ENCODE measurements at regions of chr17 and their contacts with region 1.

Region 1: DNA sequence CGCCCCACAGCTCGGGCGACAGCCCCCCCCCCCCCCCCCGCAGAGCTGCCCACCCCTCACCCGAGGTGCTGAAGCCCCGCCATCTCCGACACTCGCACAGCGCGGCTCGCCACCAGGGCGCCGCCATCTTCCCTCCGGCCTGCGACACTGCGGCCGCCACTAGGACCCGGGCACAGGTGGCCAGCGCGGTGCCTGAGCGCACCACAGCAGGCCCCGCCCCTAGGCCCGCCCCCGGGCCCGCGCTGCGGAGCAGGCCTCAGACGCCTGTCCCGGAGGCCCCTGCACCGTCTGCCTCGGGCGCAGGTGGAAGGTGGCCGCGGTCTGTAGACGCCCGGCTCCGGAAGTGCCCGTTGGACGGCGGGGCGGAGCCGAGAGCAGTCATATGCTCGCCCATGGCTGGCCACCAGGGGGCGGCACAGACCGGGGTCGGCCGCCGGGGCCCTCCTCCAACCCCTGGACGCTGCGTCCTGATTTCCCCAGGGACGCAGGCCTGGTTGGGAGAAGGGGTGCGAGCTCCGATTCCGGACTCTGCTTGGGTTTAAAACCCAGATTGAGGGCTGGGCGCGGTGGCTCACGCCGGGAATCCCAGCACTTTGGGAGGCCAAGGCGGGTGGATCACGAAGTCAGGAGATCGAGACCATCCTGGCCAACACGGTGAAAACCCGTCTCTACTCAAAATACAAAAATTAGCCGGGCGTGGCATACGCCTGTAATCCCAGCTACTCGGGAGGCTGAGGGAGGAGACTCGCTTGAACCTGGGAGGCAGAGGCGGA is at the start of gene MRPL38:
- DNase-seq: peak; percentile 91 to 97 (median 96)
- ATAC-seq: peak; percentile 95 to 96
- H3K4me3 ChIP-seq: peak within 1 kb of the TSS; percentile 77
- H3K27ac ChIP-seq: peak within 1 kb of the TSS; percentile 75
- H3K4me1 ChIP-seq: no peaks in the 10 kb centered on the region
- H3K27me3 ChIP-seq: no peaks in the 10 kb centered on the region
- total RNA-seq, gene MRPL38: 64.1 to 94.2 (median 83.8) TPM

Region 2: DNA sequence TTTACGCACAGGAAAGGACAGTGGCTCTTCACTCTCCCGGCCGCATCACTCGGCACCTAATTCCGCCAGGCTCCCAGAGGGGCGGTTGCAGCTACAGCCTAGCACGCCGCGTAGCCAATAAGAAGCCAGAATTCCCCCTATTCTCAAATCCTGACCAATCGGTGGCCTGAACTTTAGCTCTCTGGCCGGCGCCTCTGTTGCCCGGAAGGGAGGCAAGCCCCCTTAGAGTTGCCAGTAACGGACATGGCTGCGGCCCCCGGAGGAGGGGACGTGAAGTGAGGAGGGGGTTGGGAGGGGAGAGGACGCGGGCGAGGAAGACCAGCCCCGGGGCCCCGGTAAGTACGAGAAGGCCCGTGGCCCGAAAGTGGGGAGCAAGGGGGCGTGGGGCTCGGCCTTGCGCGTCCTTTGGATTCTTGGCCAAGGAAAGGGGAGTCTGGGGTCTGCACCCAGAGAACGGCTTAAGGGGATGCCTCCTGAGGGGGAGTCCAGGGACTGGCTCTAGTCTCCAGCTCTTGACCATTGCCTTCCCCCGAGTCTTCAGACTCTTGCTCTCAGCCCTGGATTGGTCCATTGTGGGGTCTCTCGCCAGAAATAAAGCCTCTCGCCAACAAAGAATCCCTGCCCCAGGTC is 448.4 kb before region 1 on chr17 and contains the start of gene TMEM94:
- intact Hi-C with region 1: no loop called
- DNase-seq: peak; percentile 95 to 98 (median 97)
- ATAC-seq: peak; percentile 99
- H3K4me3 ChIP-seq: peak within 1 kb of the TSS; percentile 93
- H3K27ac ChIP-seq: peak within 1 kb of the TSS; percentile 91
- H3K4me1 ChIP-seq: peaks cover 2% of the 10 kb centered on the region
- H3K27me3 ChIP-seq: no peaks in the 10 kb centered on the region
- total RNA-seq, gene TMEM94: 40.3 to 54.6 (median 50.3) TPM

Region 3: GRCh38 chr17:76005263-76006149 is 100.6 kb after region 1 on chr17:
- intact Hi-C with region 1: loop called (anchors 2 to 5 kb)
- DNase-seq: peak; percentile 73 to 84 (median 78)
- ATAC-seq: peak; percentile 57 to 69
- H3K4me3 ChIP-seq: no peak overlapping the region
- H3K27ac ChIP-seq: no peak overlapping the region
- H3K4me1 ChIP-seq: no peaks in the 10 kb centered on the region
- H3K27me3 ChIP-seq: no peaks in the 10 kb centered on the region

Region 4: GRCh38 chr17:76014184-76014924 is 109.4 kb after region 1 on chr17:
- intact Hi-C with region 1: loop called in 2 of 4 experiments (anchors 5 kb)
- DNase-seq: peak; percentile 67 to 87 (median 81)
- ATAC-seq: peak; percentile 72 to 78
- H3K4me3 ChIP-seq: no peak overlapping the region
- H3K27ac ChIP-seq: no peak overlapping the region
- H3K4me1 ChIP-seq: no peaks in the 10 kb centered on the region
- H3K27me3 ChIP-seq: no peaks in the 10 kb centered on the region